Right ventricle myocardium superior (tissue), 1 donor: ENCODE measurements at regions of chr11 and their contacts with region 1.

Region 1: GRCh38 chr11:93895106-93895862 is 44.9 kb upstream of the VSTM5 start:
- DNase-seq: no peak
- ATAC-seq: peak; percentile 62

Region 2: GRCh38 chr11:93560199-93560932 is 334.9 kb before region 1 on chr11:
- intact Hi-C with region 1: no loop called
- DNase-seq: no peak
- ATAC-seq: no peak

Region 3: GRCh38 chr11:93585758-93586157 is 309.5 kb before region 1 on chr11:
- intact Hi-C with region 1: no loop called
- DNase-seq: no peak
- ATAC-seq: no peak

Region 4: GRCh38 chr11:94046796-94047195 is 151.5 kb after region 1 on chr11:
- intact Hi-C with region 1: no loop called
- DNase-seq: no peak
- ATAC-seq: no peak

Region 5: GRCh38 chr11:94417386-94417987 is 522.2 kb after region 1 on chr11:
- intact Hi-C with region 1: loop called (anchors 5 kb)
- DNase-seq: no peak
- ATAC-seq: peak; percentile 65

Region 6: DNA sequence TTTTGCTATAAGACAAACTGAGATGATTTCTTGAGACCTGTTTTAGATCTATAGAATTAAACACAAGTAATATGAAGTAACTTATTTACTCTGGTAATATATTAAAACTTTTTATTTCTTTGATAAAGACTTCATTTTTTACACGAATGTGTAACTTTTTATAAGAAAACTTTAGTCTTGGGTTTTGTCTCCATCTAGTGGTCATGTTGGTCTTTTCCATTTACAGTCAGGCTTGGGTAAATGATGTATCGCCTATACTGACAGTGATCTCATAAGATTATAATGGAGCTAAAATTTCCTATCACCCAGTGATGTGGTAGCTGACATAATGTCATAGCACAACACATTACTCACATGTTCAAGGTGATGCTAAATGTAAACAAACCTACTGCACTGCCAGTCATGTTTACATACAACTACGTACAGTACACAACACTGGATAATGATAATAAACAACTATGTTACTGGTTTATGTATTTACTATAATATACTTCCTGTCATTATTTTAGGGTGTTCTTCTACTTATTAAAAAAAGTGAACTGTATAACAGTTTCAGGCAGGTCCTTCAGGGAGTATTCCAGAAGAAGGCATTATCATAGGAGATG is 609.5 kb after region 1 on chr11:
- intact Hi-C with region 1: loop called (anchors 10 kb)
- DNase-seq: no peak
- ATAC-seq: peak; percentile 34